ENCODE measurements at regions of chr11 and their contacts with region 1.

Region 1: DNA sequence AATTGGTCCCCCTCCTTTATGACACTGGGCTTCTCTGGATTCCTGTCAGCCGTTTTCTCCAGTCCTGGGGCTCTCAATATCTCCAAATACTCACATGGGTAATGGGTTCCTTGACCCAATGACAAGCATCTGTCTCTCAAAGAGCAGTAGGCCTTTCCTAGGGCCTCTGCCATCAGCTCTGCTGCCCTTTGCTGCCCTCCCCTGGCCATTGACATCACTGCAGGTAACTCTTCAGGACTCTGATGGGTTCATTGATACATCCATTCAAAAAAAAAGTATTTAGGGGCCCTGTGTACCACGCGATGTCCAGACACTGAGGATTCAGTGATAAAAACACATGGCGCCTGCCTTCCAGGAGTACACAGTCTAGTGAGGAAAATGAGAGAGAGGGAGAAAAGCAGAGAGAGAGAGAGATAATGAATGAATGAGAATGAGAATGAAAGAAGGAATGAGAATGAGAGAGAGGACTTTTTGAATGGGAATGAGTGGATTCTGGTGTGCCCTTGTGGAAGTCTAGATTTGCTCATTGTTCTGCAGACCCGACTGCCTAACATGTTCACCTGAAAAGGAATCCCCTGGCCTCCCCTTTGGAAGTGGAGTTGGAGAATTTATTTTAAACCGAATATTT is 42.6 kb upstream of the OLFML1 start:
- ATAC-seq: peak; percentile 38 to 97 (median 78)
- H3K4me3 ChIP-seq: no peak overlapping the region
- H3K27ac ChIP-seq: no peak overlapping the region
- H3K4me1 ChIP-seq: no peaks in the 10 kb centered on the region

Region 2: DNA sequence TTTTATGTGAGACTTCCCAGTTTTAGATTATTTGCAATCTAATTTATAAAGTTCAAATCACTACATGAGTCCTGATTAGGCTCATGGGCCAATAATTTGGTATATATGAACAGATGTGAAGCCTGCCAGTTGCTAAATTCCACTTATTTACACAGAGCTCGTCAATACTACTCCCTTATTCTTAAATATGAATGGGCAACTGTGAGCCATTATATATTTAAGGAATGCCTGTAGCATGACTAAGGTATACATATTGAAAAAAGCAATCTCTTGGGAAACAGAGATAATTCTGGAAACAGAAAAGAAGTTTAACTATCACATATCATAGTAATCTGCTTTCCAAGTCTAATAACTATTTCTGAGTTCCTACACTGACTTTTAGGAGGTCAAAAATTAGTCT is 326.9 kb before region 1 on chr11:
- in situ Hi-C with region 1: loop called in 1 of 9 experiments (anchors 25 kb)
- ATAC-seq: peak in 1 of 8 experiments; percentile 72
- H3K4me3 ChIP-seq: no peak overlapping the region
- H3K27ac ChIP-seq: no peak overlapping the region
- H3K4me1 ChIP-seq: no peaks in the 10 kb centered on the region

Region 3: DNA sequence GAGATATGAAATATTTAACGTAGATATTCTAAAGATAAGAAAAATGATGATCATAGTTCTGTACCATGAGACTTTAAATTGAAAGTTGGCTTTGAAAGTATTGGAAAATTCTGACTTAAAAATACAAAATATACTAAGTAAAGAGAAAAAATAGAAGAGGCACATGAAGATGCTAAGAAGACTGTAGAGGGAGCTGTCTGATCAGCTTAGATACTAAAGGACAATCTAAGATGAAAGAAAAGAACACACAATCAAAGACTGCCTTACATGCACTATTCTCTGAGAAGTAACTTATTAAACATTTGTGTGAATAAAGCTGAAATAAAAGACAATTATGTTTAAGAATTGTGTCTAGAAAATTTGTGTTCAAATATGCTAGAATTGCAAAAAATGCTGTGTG is 298.8 kb before region 1 on chr11:
- in situ Hi-C with region 1: loop called in 1 of 9 experiments (anchors 10 kb)
- ATAC-seq: peak in 4 of 8 experiments; percentile 20 to 53 (median 30)
- H3K4me3 ChIP-seq: no peak overlapping the region
- H3K27ac ChIP-seq: no peak overlapping the region
- H3K4me1 ChIP-seq: no peaks in the 10 kb centered on the region

Region 4: DNA sequence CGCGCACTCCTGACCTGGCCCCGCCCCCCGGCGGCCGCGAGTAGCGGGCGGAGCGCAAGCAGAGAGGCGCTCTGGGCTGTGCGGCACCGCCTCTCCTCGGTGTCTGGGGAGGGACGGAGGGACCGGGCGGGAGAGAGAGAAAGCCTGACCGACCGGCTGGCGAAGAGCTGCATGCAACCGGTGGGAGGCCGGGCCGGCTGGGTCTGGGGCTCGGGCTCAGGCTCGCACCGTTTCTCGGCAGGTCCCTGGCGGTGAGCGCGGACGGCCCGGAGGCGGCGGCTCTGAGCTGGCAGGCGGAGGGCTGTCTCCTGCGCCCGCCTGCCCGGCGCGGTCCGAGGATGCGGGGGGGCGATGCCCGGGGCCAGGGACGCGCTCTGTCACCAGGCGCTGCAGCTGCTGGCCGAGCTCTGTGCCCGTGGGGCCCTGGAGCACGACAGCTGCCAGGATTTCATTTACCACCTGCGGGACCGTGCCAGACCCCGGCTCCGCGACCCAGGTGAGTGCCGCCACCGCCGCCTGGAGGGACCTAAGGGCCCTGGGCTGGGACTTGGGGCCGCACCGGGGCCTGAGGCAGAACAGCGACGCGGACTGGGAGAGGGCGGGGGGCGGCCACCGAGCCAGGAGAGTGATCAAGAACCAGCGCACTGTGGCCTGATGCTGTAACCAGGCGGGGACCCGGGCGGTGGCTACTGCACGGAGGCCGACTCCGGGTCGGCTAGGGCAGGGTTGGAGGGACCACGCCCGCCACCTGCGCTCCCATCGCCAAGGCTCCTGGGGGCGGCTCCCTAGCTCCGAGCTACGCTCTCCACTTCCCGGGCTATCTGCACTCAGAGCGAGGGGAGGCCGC is 190.6 kb before region 1 on chr11 and contains the start of gene SYT9:
- in situ Hi-C with region 1: loop called in 1 of 9 experiments (anchors 25 kb)
- ATAC-seq: peak; percentile 89 to 93 (median 92)
- H3K4me3 ChIP-seq: peak within 1 kb of the TSS; percentile 63 to 86 (median 75)
- H3K27ac ChIP-seq: no peak within 1 kb of the TSS
- H3K4me1 ChIP-seq: peaks cover 0 to 4% of the 10 kb centered on the region in 2 donors
- total RNA-seq, gene SYT9: 0.09 to 23.0 (median 5.2) TPM

Measured in motor neuron (in vitro differentiated cells).